PC-3 (cell line): ENCODE measurements at regions of chr2 and their contacts with region 1.

Region 1: DNA sequence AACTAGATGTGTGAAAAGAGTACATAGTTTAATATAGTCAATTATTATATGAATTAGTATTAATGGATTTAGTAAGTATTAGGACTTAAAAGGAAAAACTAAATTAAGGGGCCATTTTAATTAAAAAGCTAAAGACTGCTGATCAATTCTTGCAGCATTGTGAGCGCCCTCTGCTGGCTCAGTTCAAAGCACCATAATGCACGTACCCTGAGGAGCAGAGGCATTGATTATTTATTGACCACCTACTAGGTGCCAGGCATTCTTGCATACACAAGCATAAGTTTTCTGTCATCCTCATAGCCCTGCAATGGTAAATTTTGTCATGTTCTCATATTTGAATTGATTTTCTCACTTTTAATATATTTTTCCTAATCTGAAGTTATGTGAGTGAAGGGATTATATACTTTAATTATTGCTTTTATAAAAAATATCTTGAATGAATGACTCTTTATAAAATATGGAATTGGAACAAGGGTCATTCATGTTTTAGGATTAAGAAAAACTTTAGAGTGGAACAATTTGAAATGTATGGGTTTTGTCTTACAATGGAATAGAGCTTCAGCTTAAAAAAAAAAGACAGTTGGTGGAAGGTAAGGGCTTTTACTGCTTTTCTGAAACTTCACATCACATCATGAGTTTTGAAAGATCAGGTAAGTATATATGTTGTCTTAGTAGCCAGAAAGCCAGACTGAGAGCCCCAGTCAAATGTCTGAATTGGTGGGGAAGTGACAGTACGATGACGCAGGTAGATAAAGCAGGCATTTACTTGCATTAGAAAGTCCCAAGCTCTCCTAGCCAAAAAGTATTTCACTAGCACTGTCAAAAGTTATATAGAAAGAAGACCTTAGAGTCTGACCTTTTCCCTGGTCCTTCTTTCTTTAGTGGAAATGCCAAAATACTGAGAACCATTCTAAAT is 9.7 kb downstream of the ITGA4 start:
- DNase-seq: peak; percentile 67
- ATAC-seq: peak; percentile 50; the same call in 1 of the 2 replicates
- H3K4me3 ChIP-seq: no peak overlapping the region
- H3K27ac ChIP-seq: no peak overlapping the region
- H3K4me1 ChIP-seq: peaks cover 15% of the 10 kb centered on the region
- H3K27me3 ChIP-seq: no peaks in the 10 kb centered on the region
- CTCF ChIP-seq: peak; percentile 86

Region 2: DNA sequence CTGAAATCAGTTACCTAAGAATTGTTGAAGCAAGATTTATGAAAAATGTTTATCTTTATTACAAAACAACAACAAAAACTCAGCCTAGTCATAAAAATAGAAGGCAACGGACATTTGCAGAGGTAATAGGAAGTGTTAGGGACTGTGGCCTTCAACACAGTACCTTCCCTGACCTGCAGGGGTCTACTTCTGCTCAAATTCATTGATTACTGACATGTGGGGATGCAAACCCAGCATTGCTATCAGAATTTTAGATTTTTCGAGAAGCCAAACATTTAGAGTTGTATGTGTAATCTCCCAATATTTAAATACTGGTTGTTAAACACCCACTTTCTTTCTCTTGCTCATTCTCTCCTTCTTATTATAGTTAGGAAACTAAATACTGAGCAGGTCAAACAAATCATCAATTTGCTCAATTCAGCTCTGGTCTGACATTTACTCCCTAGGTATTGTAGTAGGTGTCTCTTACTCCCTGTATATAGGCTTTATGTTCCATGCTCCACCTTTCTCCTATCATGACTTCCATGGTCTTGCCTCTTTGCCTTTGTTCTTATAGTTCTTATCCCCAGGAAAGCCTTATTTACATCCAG is 288.0 kb before region 1 on chr2:
- CTCF ChIA-PET with region 1: no interaction called
- POLR2A ChIA-PET with region 1: no interaction called
- intact Hi-C with region 1: loop called (anchors 10 kb)
- DNase-seq: peak; percentile 45
- ATAC-seq: no peak
- H3K4me3 ChIP-seq: no peak overlapping the region
- H3K27ac ChIP-seq: no peak overlapping the region
- H3K4me1 ChIP-seq: peaks cover 29% of the 10 kb centered on the region
- H3K27me3 ChIP-seq: no peaks in the 10 kb centered on the region
- CTCF ChIP-seq: peak; percentile 65

Region 3: DNA sequence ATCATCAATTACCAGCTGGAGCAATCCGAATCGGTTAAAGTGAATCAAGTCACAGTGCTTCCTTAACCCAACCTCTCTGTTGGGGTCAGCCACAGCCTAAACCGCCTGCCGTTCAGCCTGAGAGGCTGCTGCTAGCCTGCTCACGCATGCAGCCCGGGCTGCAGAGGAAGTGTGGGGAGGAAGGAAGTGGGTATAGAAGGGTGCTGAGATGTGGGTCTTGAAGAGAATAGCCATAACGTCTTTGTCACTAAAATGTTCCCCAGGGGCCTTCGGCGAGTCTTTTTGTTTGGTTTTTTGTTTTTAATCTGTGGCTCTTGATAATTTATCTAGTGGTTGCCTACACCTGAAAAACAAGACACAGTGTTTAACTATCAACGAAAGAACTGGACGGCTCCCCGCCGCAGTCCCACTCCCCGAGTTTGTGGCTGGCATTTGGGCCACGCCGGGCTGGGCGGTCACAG is 10.2 kb before region 1 on chr2:
- CTCF ChIA-PET with region 1: no interaction called
- POLR2A ChIA-PET with region 1: no interaction called
- intact Hi-C with region 1: no loop called
- DNase-seq: no peak
- ATAC-seq: no peak
- H3K4me3 ChIP-seq: peak overlapping the region; percentile 69
- H3K27ac ChIP-seq: no peak overlapping the region
- H3K4me1 ChIP-seq: no peaks in the 10 kb centered on the region
- H3K27me3 ChIP-seq: no peaks in the 10 kb centered on the region
- CTCF ChIP-seq: no peak

Region 4: DNA sequence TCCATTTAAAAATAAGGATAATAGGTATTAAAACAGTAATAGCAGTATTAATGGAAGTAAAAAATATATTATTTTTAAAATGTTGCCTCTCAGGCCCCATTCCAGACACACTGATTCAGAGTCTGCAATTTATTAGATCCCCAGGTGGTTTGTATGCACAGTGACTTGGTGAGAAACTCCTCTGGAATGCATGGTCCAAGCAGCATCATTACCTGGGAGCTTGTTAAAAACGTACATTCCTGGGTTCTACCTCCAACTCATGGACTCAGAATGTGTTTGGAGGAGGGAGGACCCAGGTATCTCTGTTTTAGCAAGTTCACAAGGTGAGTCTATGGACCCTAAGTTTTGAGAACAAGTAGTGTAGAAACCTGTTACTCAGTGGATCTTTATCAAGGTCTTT is 85.9 kb after region 1 on chr2:
- CTCF ChIA-PET with region 1: no interaction called
- POLR2A ChIA-PET with region 1: no interaction called
- intact Hi-C with region 1: loop called (anchors 5 kb)
- DNase-seq: peak; percentile 95
- ATAC-seq: peak; percentile 97
- H3K4me3 ChIP-seq: no peak overlapping the region
- H3K27ac ChIP-seq: peak overlapping the region; percentile 71
- H3K4me1 ChIP-seq: peaks cover 45% of the 10 kb centered on the region
- H3K27me3 ChIP-seq: no peaks in the 10 kb centered on the region
- CTCF ChIP-seq: no peak

Region 5: GRCh38 chr2:182186132-182186735 is 719.3 kb after region 1 on chr2:
- CTCF ChIA-PET with region 1: no interaction called
- POLR2A ChIA-PET with region 1: no interaction called
- intact Hi-C with region 1: no loop called
- DNase-seq: peak; percentile 86
- ATAC-seq: peak; percentile 46
- H3K4me3 ChIP-seq: no peak overlapping the region
- H3K27ac ChIP-seq: no peak overlapping the region
- H3K4me1 ChIP-seq: no peaks in the 10 kb centered on the region
- H3K27me3 ChIP-seq: no peaks in the 10 kb centered on the region; the same call in 1 of the 2 replicates
- CTCF ChIP-seq: peak; percentile 85